ENCODE measurements at regions of chr19 and their contacts with region 1.

Region 1: GRCh38 chr19:12881172-12881808 is at the start of gene DNASE2:
- DNase-seq: peak; percentile 98
- ATAC-seq: peak; percentile 97
- H3K4me3 ChIP-seq: peak within 1 kb of the TSS; percentile 93
- H3K27ac ChIP-seq: no peak within 1 kb of the TSS
- H3K4me1 ChIP-seq: peaks cover 7% of the 10 kb centered on the region; the same call in 1 of the 2 replicates
- H3K27me3 ChIP-seq: peaks cover 9% of the 10 kb centered on the region; the same call in 1 of the 2 replicates
- CTCF ChIP-seq: no peak
- total RNA-seq, gene DNASE2: 47.1 and 48.0 TPM in 2 replicates

Region 2: DNA sequence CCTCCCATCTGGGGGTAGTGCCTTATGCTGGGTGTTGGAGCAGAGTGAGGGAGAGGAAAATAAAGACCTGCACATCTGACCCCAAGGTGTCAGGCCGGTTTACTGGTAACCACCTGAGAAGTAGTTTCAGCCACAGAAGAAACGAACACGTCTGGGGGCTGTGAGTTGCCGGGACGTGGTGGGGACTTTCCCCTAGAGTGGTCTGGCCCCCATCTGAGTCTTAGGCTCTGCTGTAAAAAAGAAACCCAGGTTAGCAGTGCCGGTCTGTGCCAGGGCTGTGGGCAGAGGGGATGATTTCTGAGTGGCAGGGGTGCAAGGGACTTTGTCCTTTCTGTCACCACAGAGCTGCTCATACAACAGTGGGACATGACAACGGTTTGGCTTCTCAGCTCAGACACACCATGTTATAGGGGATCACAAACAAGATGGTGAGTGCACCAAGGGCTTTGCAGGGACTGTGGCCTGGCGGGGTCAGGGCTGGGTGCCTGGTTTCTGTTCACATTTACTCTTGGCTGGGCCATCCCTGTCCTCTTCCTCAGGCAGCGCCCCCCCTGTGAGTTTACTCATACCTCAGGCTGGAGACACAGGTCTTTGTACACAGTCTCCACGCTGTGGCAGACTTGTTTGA is 18.7 kb after region 1 on chr19:
- CTCF ChIA-PET with region 1: no interaction called
- POLR2A ChIA-PET with region 1: no interaction called
- intact Hi-C with region 1: no loop called
- DNase-seq: no peak
- ATAC-seq: no peak
- H3K4me3 ChIP-seq: no peak overlapping the region
- H3K27ac ChIP-seq: no peak overlapping the region
- H3K4me1 ChIP-seq: no peaks in the 10 kb centered on the region
- H3K27me3 ChIP-seq: no peaks in the 10 kb centered on the region
- CTCF ChIP-seq: no peak

Region 3: GRCh38 chr19:12974301-12975220 is 93.3 kb after region 1 on chr19:
- CTCF ChIA-PET with region 1: interaction called, 13 read pairs
- POLR2A ChIA-PET with region 1: no interaction called
- intact Hi-C with region 1: no loop called
- DNase-seq: no peak
- ATAC-seq: no peak
- H3K4me3 ChIP-seq: no peak overlapping the region
- H3K27ac ChIP-seq: no peak overlapping the region
- H3K4me1 ChIP-seq: no peaks in the 10 kb centered on the region
- H3K27me3 ChIP-seq: no peaks in the 10 kb centered on the region
- CTCF ChIP-seq: no peak